Naive thymus-derived CD4-positive, alpha-beta T cell (primary cell): ENCODE measurements at regions of chr16 and their contacts with region 1.

Region 1: DNA sequence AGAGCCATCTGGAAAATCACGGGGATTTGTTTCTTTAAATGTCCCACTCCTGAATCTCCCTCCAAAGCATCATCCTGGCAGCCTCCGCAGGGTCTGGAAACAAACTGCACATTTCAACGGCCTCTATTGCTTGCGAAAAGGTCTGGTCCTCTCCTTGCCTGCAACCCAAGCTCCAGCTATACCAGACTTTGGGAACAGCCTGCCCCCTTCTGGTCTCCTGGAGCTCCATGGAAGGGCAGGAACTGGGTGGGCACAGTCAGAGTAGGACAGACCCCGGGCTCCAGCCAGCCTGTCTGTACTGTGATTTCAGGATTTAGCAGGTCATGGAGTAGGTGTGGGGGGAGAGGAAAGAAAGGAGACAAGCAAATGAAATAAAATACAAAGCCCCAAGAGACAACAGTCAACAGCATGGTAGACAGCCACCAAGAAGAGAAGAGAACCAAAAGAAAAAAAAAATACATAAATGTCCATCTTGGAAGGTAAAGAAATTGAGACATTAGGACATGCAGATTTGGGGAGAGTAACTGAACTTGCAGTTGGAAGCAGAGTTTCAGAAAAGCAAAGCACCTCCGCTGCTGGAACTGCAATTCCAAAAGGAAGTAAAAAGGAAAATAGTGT is 2.7 kb downstream of the XYLT1 start:
- DNase-seq: peak in 5 of 9 donors; percentile 13 to 39 (median 24)
- ATAC-seq: peak; percentile 39
- H3K4me3 ChIP-seq: peak overlapping the region; percentile 9
- H3K4me3 Mint-ChIP-seq: peak overlapping the region; percentile 84 to 98 (median 95)
- H3K27ac ChIP-seq: no peak overlapping the region
- H3K27ac Mint-ChIP-seq: peak overlapping the region in 5 of 9 donors; percentile 6 to 90 (median 20)
- H3K4me1 ChIP-seq: peaks cover 20 to 26% of the 10 kb centered on the region in 2 donors
- H3K4me1 Mint-ChIP-seq: peaks cover 47 to 64% (median 57%) of the 10 kb centered on the region in 7 donors
- H3K27me3 ChIP-seq: no peaks in the 10 kb centered on the region
- H3K27me3 Mint-ChIP-seq: no peaks in the 10 kb centered on the region

Region 2: GRCh38 chr16:17013038-17013437 is 455.0 kb before region 1 on chr16:
- CTCF ChIA-PET with region 1: no interaction called
- POLR2A ChIA-PET with region 1: no interaction called
- intact Hi-C with region 1: loop called in 1 of 2 experiments (anchors 1 kb)
- DNase-seq: no peak
- ATAC-seq: no peak
- H3K4me3 ChIP-seq: peak overlapping the region; percentile 44
- H3K4me3 Mint-ChIP-seq: peak overlapping the region; percentile 42 to 89 (median 86)
- H3K27ac ChIP-seq: peak overlapping the region; percentile 2
- H3K27ac Mint-ChIP-seq: peak overlapping the region; percentile 85 to 98 (median 93)
- H3K4me1 ChIP-seq: peaks cover 5 to 8% of the 10 kb centered on the region in 2 donors
- H3K4me1 Mint-ChIP-seq: peaks cover 8 to 34% (median 22%) of the 10 kb centered on the region in 7 donors
- H3K27me3 ChIP-seq: no peaks in the 10 kb centered on the region
- H3K27me3 Mint-ChIP-seq: peaks cover 0 to 4% (median 0%) of the 10 kb centered on the region in 5 donors

Region 3: GRCh38 chr16:17211797-17212196 is 256.2 kb before region 1 on chr16:
- CTCF ChIA-PET with region 1: interaction called, 7 read pairs
- POLR2A ChIA-PET with region 1: no interaction called
- intact Hi-C with region 1: loop called (anchors 1 to 5 kb)
- DNase-seq: peak in 8 of 9 donors; percentile 4 to 50 (median 34)
- ATAC-seq: peak; percentile 77
- H3K4me3 ChIP-seq: no peak overlapping the region
- H3K4me3 Mint-ChIP-seq: no peak overlapping the region
- H3K27ac ChIP-seq: no peak overlapping the region
- H3K27ac Mint-ChIP-seq: peak overlapping the region in 2 of 9 donors; percentile 21 to 91
- H3K4me1 ChIP-seq: peaks cover 0 to 7% of the 10 kb centered on the region in 2 donors
- H3K4me1 Mint-ChIP-seq: peaks cover 10 to 41% (median 30%) of the 10 kb centered on the region in 7 donors
- H3K27me3 ChIP-seq: no peaks in the 10 kb centered on the region
- H3K27me3 Mint-ChIP-seq: no peaks in the 10 kb centered on the region

Region 4: DNA sequence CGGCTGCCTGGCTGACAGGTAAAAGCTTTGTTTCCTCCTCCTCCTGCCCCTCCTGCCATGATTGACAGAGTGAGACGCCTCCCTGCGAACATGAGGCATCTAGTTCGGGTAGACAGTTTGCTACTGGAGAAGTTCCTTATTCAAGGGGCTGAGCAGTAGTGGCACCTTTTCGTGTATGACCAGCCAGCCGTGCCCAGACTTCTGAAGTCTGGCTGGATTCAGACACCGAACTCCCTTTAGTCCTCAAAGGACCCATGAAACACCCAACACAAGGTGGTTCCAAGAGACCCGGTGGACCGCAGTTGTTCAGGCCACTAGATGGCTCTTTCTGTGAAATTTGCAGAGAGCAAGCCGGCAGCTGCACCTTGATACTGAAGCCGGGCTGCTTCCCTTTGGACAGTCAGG is 190.1 kb before region 1 on chr16:
- CTCF ChIA-PET with region 1: interaction called, 4 read pairs
- POLR2A ChIA-PET with region 1: no interaction called
- intact Hi-C with region 1: loop called (anchors 5 kb)
- DNase-seq: peak in 1 of 9 donors; percentile 11
- ATAC-seq: peak; percentile 34
- H3K4me3 ChIP-seq: no peak overlapping the region
- H3K4me3 Mint-ChIP-seq: no peak overlapping the region
- H3K27ac ChIP-seq: no peak overlapping the region
- H3K27ac Mint-ChIP-seq: peak overlapping the region in 2 of 9 donors; percentile 10 to 33
- H3K4me1 ChIP-seq: peaks cover 0 to 23% of the 10 kb centered on the region in 2 donors
- H3K4me1 Mint-ChIP-seq: peaks cover 29 to 71% (median 57%) of the 10 kb centered on the region in 7 donors
- H3K27me3 ChIP-seq: no peaks in the 10 kb centered on the region
- H3K27me3 Mint-ChIP-seq: no peaks in the 10 kb centered on the region

Region 5: GRCh38 chr16:17364319-17365210 is 103.5 kb before region 1 on chr16:
- CTCF ChIA-PET with region 1: interaction called, 8 read pairs
- POLR2A ChIA-PET with region 1: interaction called, 4 read pairs
- intact Hi-C with region 1: loop called (anchors 1 to 2 kb)
- DNase-seq: peak in 7 of 9 donors; percentile 81 to 95 (median 91)
- ATAC-seq: peak; percentile 90
- H3K4me3 ChIP-seq: peak overlapping the region; percentile 28
- H3K4me3 Mint-ChIP-seq: peak overlapping the region; percentile 48 to 90 (median 73)
- H3K27ac ChIP-seq: peak overlapping the region; percentile 95
- H3K27ac Mint-ChIP-seq: peak overlapping the region; percentile 97 to 100 (median 99)
- H3K4me1 ChIP-seq: peaks cover 90 to 91% of the 10 kb centered on the region in 2 donors
- H3K4me1 Mint-ChIP-seq: peaks cover 68 to 100% (median 97%) of the 10 kb centered on the region in 7 donors
- H3K27me3 ChIP-seq: no peaks in the 10 kb centered on the region
- H3K27me3 Mint-ChIP-seq: no peaks in the 10 kb centered on the region

Region 6: GRCh38 chr16:17448640-17449638 is 19.1 kb before region 1 on chr16:
- CTCF ChIA-PET with region 1: interaction called, 5 read pairs
- POLR2A ChIA-PET with region 1: interaction called, 3 read pairs
- intact Hi-C with region 1: loop called (anchors 2 kb)
- DNase-seq: peak in 7 of 9 donors; percentile 9 to 37 (median 32)
- ATAC-seq: peak; percentile 82
- H3K4me3 ChIP-seq: peak overlapping the region; percentile 45
- H3K4me3 Mint-ChIP-seq: peak overlapping the region; percentile 12 to 73 (median 64)
- H3K27ac ChIP-seq: peak overlapping the region; percentile 54
- H3K27ac Mint-ChIP-seq: peak overlapping the region; percentile 72 to 94 (median 84)
- H3K4me1 ChIP-seq: peaks cover 25 to 38% of the 10 kb centered on the region in 2 donors
- H3K4me1 Mint-ChIP-seq: peaks cover 35 to 66% (median 53%) of the 10 kb centered on the region in 7 donors
- H3K27me3 ChIP-seq: no peaks in the 10 kb centered on the region
- H3K27me3 Mint-ChIP-seq: no peaks in the 10 kb centered on the region